Lower lobe of right lung (tissue), 2 donors: ENCODE measurements at regions of chr1 and their contacts with region 1.

Region 1: GRCh38 chr1:231357831-231358354 is 19.8 kb downstream of the SPRTN start:
- DNase-seq: no peak
- ATAC-seq: peak; percentile 88 to 89
- H3K4me3 ChIP-seq: no peak overlapping the region
- H3K27ac ChIP-seq: no peak overlapping the region
- H3K4me1 ChIP-seq: peaks cover 4% of the 10 kb centered on the region
- H3K27me3 ChIP-seq: no peaks in the 10 kb centered on the region
- CTCF ChIP-seq: peak; percentile 74

Region 2: DNA sequence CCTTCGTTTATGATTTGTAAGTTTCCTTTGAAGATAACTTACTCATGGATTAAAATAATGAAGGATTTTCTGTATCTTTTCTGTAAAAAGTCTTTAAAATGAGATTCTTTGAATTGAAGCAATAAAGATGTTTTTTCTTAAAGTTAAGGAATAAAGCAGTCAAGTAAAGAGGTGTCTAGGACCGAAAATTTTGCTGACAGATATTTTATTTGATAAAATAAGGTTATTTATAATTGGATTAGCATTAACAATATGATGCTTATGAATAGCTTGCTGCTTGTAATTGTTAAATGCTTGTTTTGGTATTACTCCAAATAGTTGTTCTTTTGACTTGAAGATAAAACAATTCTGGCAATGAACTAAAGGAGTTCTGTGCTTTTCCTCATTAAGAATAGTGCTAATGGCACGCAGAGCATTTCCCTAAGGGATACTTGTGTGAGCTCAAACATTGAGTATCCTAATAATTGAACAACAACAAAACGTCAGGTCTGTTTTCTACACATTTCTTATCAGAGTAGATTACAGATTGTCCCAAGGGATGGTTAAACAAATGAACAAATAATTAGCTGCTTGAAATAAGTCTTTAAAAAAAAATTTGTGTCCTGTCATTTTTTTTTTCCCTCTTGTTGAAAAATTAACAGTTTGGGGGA is 187.2 kb after region 1 on chr1:
- intact Hi-C with region 1: no loop called
- DNase-seq: no peak
- ATAC-seq: no peak
- H3K4me3 ChIP-seq: no peak overlapping the region
- H3K27ac ChIP-seq: no peak overlapping the region
- H3K4me1 ChIP-seq: peaks cover 16% of the 10 kb centered on the region
- H3K27me3 ChIP-seq: no peaks in the 10 kb centered on the region
- CTCF ChIP-seq: no peak

Region 3: GRCh38 chr1:231603598-231604275 is 245.8 kb after region 1 on chr1:
- intact Hi-C with region 1: loop called (anchors 10 kb)
- DNase-seq: no peak
- ATAC-seq: peak; percentile 55 to 87
- H3K4me3 ChIP-seq: peak overlapping the region; percentile 50
- H3K27ac ChIP-seq: no peak overlapping the region
- H3K4me1 ChIP-seq: peaks cover 27% of the 10 kb centered on the region
- H3K27me3 ChIP-seq: no peaks in the 10 kb centered on the region
- CTCF ChIP-seq: peak; percentile 83